ENCODE measurements at regions of chr4 and their contacts with region 1.

Region 1: DNA sequence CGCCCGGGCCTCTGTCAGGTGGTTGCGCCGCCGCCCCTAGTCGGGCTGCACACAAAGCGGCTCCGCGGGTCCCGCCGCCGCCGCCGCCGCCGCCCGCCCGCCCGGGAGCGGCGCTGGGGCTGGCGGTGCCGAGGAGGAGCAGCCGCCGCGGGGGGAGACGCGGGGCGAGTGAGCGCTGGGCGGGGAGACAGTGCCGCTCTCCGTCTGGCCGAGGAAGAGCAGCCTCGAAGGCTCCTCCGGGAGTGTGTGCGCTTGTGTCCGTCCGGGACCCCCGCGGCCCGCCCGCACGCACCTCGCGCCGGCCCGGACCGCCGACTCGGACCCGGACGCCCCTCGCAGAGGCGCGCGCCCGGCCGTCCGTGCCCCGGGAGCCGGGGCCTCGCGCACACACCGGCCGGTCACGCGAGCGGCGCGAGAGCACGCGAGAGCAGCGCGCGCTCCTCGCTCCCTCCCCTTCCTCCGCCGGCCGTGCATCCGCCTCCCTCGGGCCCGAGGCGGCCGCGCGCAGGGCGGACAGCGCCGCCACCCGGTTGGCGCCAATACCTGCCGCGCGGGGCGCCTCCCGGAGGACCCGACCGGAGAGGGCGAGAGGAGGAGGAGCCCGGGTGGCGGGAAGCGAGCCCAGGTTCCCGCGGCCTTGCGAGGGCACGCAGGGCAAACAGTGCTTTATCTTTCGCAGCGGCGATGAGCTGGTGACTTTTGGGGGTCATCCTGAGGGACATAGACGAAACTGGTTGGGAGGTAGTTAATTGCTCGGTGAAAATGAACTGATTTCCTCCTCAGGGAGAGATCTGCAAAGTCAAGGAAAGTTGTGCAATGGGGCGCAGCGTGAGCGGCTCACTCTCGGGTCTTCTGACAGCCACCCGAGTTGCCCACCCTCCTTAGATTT is at the start of gene PDS5A:
- DNase-seq: peak; percentile 93
- ATAC-seq: peak; percentile 89
- H3K4me3 Mint-ChIP-seq: peak within 1 kb of the TSS; percentile 87
- H3K27ac Mint-ChIP-seq: peak within 1 kb of the TSS; percentile 93
- H3K4me1 Mint-ChIP-seq: peaks cover 41% of the 10 kb centered on the region
- H3K27me3 Mint-ChIP-seq: no peaks in the 10 kb centered on the region
- total RNA-seq, gene PDS5A: 115 to 116 TPM

Region 2: GRCh38 chr4:39697740-39698423 is 279.9 kb before region 1 on chr4 and contains the start of gene UBE2K:
- CTCF ChIA-PET with region 1: interaction called, 17 read pairs
- DNase-seq: peak; percentile 91
- ATAC-seq: peak; percentile 90
- H3K4me3 Mint-ChIP-seq: peak within 1 kb of the TSS; percentile 94
- H3K27ac Mint-ChIP-seq: peak within 1 kb of the TSS; percentile 96
- H3K4me1 Mint-ChIP-seq: peaks cover 25% of the 10 kb centered on the region
- H3K27me3 Mint-ChIP-seq: no peaks in the 10 kb centered on the region
- total RNA-seq, gene UBE2K: 75.4 to 90.4 TPM

Region 3: DNA sequence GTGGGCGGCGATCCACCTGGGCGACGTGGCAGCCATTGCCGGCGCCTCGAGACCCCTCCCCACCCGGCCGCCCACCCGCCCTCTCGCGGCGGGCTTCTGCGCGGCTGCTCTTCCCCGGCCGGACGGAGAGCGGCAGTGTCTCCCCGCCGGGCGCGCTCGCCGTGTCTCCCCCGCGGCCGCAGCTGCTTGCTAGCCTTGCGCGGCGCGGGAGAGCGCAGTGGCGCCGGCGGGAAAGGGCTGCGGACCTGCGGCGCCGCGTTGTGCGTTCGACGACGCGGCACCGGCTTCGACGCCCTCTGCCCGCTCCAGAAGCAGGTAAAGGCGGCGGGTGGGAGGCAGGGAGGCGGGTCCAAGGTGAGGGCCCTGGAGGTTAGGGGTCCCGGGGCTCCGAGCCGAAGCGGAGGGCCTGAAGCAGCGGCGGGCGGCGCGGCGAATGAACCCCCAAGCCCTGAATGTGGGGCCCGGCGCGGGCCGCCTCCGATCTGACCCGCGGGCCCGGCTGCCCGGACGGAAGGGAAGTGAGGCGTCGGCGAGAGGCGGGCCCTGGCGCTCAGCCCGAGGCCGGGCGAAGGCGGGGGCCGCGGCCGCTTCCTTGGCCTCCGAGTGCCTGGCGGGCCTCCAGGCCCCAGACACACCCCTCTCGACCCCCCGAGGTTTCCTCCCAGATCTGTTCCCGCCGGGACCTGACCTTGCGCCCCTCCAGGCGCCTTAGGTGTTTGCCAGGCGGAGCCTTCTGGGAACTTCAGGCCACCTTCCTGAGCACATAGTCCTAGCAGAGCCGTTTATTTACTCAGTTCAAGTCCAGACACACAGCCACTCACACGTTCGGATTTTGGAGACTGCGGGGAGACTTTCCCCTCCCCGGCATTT is 79.2 kb after region 1 on chr4 and contains the start of gene N4BP2:
- CTCF ChIA-PET with region 1: interaction called, 11 read pairs
- DNase-seq: peak; percentile 81
- ATAC-seq: peak; percentile 65
- H3K4me3 Mint-ChIP-seq: peak within 1 kb of the TSS; percentile 98
- H3K27ac Mint-ChIP-seq: peak within 1 kb of the TSS; percentile 99
- H3K4me1 Mint-ChIP-seq: peaks cover 32% of the 10 kb centered on the region
- H3K27me3 Mint-ChIP-seq: peaks cover 5% of the 10 kb centered on the region
- total RNA-seq, gene N4BP2: 26.5 to 28.4 TPM

Region 4: GRCh38 chr4:41504167-41504818 is 1526.6 kb after region 1 on chr4:
- CTCF ChIA-PET with region 1: no interaction called
- DNase-seq: no peak
- ATAC-seq: no peak
- H3K4me3 Mint-ChIP-seq: no peak overlapping the region
- H3K27ac Mint-ChIP-seq: no peak overlapping the region
- H3K4me1 Mint-ChIP-seq: no peaks in the 10 kb centered on the region
- H3K27me3 Mint-ChIP-seq: no peaks in the 10 kb centered on the region

Measured in activated CD8-positive, alpha-beta memory T cell treated with anti-CD3 and anti-CD28 coated beads, Interleukin-2, amount 10 ng/mL, durations not matched to agents 7 days and 5 days (primary cell).